ENCODE measurements at regions of chr2 and their contacts with region 1.

Region 1: DNA sequence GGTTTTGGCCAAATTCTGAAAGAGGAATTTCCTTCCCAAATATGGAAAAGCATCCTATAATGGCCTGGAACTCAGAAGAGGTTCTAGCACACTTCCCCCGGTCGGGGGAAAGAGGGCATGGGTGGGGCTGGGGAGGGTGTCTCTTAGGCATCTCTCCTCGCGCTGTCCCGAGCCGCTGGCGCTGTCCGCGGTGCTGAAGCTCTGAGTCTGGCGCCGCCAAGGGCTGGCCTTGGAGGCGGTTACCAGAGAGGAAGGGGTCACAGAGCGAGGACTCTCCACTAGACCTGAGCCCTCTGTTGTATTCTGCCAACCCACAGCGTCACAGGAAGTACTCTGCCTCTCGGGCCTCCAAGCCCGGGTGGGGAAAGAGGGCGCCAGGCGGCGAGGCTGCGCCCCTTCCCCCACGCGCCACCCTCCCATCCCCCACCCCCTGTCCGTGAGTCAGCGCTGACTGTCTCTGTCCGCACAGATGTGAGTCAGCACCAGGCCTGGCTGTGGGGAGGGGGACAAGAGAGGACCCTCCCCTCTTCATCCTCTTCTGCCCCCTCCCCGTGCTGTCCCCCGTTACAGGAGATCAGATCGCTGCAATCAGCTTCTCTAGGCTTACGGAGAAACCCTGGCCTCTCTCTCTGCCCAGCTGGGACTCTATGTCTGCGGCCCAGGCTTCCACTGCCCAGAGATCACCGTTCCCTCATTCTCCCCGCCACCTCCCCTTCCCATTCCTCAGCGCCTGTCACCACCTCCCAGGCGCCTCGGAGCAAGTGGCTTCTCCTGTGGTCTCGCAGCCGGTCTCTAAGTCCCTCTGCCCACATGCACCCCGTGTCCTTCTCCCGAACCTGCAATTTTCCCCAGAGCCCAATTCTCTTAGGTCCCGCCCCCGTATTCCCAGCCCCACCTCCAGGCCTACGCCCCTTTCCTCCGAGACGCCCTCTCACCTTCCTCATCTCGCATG is 783 bp downstream of the PTPRN start:
- DNase-seq: peak; percentile 75

Region 2: GRCh38 chr2:219020604-219021365 is 287.6 kb before region 1 on chr2:
- intact Hi-C with region 1: no loop called
- DNase-seq: no peak

Region 3: DNA sequence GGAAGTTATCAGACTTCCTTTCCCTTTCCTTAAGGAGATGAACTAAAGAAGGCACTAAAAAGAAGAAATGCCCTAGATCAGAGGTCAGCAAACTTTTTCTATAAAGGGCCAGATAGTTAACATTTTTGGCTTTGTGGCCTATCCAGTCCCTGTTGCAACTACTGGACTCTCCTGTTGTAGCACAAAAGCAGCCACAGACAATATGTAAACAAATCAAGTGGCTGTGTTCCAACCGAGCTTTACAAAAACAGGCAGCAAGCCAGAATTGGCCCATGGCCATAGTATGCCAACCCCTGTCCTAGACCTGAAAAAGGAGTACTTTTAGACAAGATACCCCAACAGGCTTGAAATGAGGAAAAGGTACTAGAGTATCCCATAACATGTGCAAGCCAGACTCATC is 158.8 kb before region 1 on chr2:
- intact Hi-C with region 1: no loop called
- DNase-seq: no peak

Region 4: GRCh38 chr2:219269362-219270054 is 38.9 kb before region 1 on chr2:
- intact Hi-C with region 1: loop called (anchors 5 kb)
- DNase-seq: no peak